Panc1 (cell line): ENCODE measurements at regions of chr2 and their contacts with region 1.

Region 1: DNA sequence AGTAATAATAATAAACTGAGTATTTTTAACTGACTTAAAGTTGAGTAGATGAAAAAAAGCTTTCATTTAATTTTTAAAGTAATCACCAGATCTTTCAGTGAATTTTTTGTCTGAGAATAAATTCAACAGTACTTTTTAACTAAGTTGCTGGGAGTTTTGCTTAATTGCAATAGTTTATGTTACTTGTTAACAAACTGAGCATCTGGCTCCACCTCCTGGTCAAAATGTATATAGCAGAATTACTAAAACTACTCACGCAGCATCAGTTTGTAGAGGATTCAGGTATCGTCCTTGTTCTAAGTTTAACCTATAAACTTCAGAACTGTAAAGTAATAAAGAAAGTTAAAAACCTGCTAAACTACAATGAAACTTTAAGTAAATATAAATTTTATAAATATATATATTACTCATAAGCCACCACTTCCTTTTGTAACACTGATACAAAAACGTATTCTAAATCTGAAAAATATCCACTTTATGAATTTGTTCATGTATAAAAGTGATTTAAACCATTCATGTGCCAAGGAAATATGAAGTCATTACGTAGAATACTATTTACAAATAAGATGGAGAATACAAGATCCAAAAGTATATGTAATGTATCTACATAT is 21.3 kb downstream of the NOL10 start:
- DNase-seq: peak; percentile 76
- ATAC-seq: no peak
- H3K4me3 ChIP-seq: no peak overlapping the region
- H3K27ac ChIP-seq: no peak overlapping the region
- H3K4me1 ChIP-seq: no peaks in the 10 kb centered on the region
- H3K27me3 ChIP-seq: no peaks in the 10 kb centered on the region
- CTCF ChIP-seq: peak; percentile 74; the same call in 1 of the 2 replicates

Region 2: GRCh38 chr2:10688921-10689807 is 20.7 kb after region 1 on chr2:
- CTCF ChIA-PET with region 1: no interaction called
- POLR2A ChIA-PET with region 1: interaction called, 15 read pairs
- in situ Hi-C with region 1: no loop called
- intact Hi-C with region 1: no loop called
- DNase-seq: no peak
- ATAC-seq: peak; percentile 49
- H3K4me3 ChIP-seq: peak overlapping the region; percentile 84 to 100
- H3K27ac ChIP-seq: peak overlapping the region; percentile 90
- H3K4me1 ChIP-seq: peaks cover 5% of the 10 kb centered on the region; the same call in 1 of the 2 replicates
- H3K27me3 ChIP-seq: no peaks in the 10 kb centered on the region
- CTCF ChIP-seq: no peak

Region 3: DNA sequence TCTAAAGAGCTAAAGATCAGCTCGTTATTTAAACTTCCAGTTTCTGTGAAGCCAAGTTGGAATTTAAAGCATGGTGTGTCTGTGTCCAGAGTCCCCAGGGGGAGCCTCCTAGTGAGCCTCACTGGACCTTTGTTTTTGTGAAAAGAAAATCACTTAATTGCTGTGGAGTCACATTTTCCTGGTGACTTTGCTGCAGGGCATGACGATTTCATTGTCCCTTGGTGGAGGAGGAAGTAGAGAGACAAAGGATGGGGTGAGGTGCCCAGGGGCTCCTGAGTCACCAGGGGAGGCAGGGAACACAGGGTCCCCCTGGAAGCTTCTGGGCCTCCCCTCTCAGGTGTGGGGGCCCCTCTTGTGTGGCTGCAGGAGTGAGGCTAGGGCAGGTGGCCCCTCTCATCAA is 72.6 kb after region 1 on chr2:
- CTCF ChIA-PET with region 1: no interaction called
- POLR2A ChIA-PET with region 1: no interaction called
- in situ Hi-C with region 1: no loop called
- intact Hi-C with region 1: no loop called
- DNase-seq: no peak
- ATAC-seq: peak; percentile 46
- H3K4me3 ChIP-seq: no peak overlapping the region
- H3K27ac ChIP-seq: no peak overlapping the region
- H3K4me1 ChIP-seq: no peaks in the 10 kb centered on the region
- H3K27me3 ChIP-seq: no peaks in the 10 kb centered on the region
- CTCF ChIP-seq: no peak

Region 4: DNA sequence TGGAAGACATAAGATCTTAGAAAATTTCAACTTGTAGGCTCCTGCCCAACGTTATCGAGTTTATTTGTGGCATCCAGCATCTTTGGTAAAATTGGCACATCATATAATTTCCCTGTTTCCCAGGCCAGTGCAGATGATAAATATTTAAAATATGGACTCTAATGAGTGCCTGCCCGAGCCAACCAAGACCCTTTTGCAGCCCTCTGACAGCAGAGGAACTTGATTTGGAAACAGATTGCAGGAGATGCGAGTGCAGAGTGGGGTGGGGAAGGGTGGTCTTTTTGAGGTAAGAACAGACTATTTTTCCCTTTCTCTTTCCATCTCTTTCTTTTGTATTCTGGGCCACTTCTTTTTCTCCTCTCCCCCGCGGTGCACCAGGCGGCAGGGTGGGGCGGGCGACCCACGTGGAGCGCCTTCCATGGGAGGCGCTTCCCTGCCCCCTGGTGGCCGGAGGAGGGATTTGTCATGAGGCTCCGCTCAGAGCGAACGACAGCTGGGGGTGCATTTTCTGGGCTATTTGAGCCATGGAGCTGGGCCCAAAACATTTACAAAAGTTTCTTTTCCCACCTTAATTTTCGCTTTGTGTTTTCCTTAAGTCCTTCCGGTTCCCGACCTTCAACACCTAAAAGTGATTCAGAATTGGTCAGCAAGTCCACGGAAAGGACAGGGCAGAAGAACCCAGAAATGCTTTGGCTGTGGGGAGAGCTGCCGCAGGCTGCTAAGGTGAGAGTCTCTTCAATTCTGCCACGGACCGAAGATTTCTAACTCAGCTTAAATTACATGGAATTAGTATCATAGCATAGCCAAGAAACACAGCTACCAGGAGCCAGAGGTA is 1110.6 kb after region 1 on chr2:
- CTCF ChIA-PET with region 1: no interaction called
- POLR2A ChIA-PET with region 1: no interaction called
- in situ Hi-C with region 1: no loop called
- intact Hi-C with region 1: no loop called
- DNase-seq: no peak
- ATAC-seq: peak; percentile 97
- H3K4me3 ChIP-seq: no peak overlapping the region
- H3K27ac ChIP-seq: peak overlapping the region; percentile 54
- H3K4me1 ChIP-seq: peaks cover 5% of the 10 kb centered on the region; the same call in 1 of the 2 replicates
- H3K27me3 ChIP-seq: no peaks in the 10 kb centered on the region
- CTCF ChIP-seq: peak; percentile 97